Right lobe of liver (tissue), 6 donors: ENCODE measurements at regions of chr19 and their contacts with region 1.

Region 1: GRCh38 chr19:11137542-11138384 is 17.8 kb downstream of the SPC24 start:
- DNase-seq: peak; percentile 81 to 90 (median 85)
- ATAC-seq: peak; percentile 51 to 72 (median 69)
- H3K4me3 ChIP-seq: peak overlapping the region in 1 of 3 donors; percentile 17
- H3K27ac ChIP-seq: peak overlapping the region; percentile 45 to 68 (median 63)
- H3K4me1 ChIP-seq: peaks cover 0 to 35% (median 18%) of the 10 kb centered on the region in 4 donors
- H3K27me3 ChIP-seq: no peaks in the 10 kb centered on the region
- CTCF ChIP-seq: peak; percentile 71 to 95 (median 86)
- POLR2A ChIP-seq: no peak

Region 2: GRCh38 chr19:10979951-10980381 is 157.8 kb before region 1 on chr19:
- intact Hi-C with region 1: no loop called
- DNase-seq: no peak
- ATAC-seq: peak in 3 of 4 donors; percentile 11 to 33 (median 18)
- H3K4me3 ChIP-seq: no peak overlapping the region
- H3K27ac ChIP-seq: no peak overlapping the region
- H3K4me1 ChIP-seq: peaks cover 0 to 9% (median 4%) of the 10 kb centered on the region in 4 donors
- H3K27me3 ChIP-seq: no peaks in the 10 kb centered on the region
- CTCF ChIP-seq: no peak
- POLR2A ChIP-seq: no peak

Region 3: GRCh38 chr19:11203194-11204075 is 65.7 kb after region 1 on chr19:
- intact Hi-C with region 1: loop called (anchors 2 to 5 kb)
- DNase-seq: peak in 2 of 3 donors; percentile 58 to 65
- ATAC-seq: peak; percentile 46 to 56 (median 50)
- H3K4me3 ChIP-seq: no peak overlapping the region
- H3K27ac ChIP-seq: peak overlapping the region in 2 of 3 donors; percentile 34 to 40
- H3K4me1 ChIP-seq: peaks cover 0 to 25% (median 12%) of the 10 kb centered on the region in 4 donors
- H3K27me3 ChIP-seq: no peaks in the 10 kb centered on the region
- CTCF ChIP-seq: peak; percentile 66 to 80 (median 76)
- POLR2A ChIP-seq: no peak

Region 4: GRCh38 chr19:11261941-11262839 is 124.4 kb after region 1 on chr19 and contains the start of gene DOCK6:
- intact Hi-C with region 1: no loop called
- DNase-seq: peak in 1 of 3 donors; percentile 53
- ATAC-seq: peak; percentile 30 to 69 (median 49)
- H3K4me3 ChIP-seq: peak within 1 kb of the TSS; percentile 69 to 84 (median 71)
- H3K27ac ChIP-seq: peak within 1 kb of the TSS; percentile 68 to 88 (median 70)
- H3K4me1 ChIP-seq: peaks cover 0 to 8% (median 2%) of the 10 kb centered on the region in 4 donors
- H3K27me3 ChIP-seq: no peaks in the 10 kb centered on the region
- CTCF ChIP-seq: peak; percentile 30 to 33 (median 32)
- POLR2A ChIP-seq: peak; percentile 28
- total RNA-seq, gene DOCK6: 19.9 to 45.9 (median 30.4) TPM